T-cell (primary cell): ENCODE measurements at regions of chr3 and their contacts with region 1.

Region 1: DNA sequence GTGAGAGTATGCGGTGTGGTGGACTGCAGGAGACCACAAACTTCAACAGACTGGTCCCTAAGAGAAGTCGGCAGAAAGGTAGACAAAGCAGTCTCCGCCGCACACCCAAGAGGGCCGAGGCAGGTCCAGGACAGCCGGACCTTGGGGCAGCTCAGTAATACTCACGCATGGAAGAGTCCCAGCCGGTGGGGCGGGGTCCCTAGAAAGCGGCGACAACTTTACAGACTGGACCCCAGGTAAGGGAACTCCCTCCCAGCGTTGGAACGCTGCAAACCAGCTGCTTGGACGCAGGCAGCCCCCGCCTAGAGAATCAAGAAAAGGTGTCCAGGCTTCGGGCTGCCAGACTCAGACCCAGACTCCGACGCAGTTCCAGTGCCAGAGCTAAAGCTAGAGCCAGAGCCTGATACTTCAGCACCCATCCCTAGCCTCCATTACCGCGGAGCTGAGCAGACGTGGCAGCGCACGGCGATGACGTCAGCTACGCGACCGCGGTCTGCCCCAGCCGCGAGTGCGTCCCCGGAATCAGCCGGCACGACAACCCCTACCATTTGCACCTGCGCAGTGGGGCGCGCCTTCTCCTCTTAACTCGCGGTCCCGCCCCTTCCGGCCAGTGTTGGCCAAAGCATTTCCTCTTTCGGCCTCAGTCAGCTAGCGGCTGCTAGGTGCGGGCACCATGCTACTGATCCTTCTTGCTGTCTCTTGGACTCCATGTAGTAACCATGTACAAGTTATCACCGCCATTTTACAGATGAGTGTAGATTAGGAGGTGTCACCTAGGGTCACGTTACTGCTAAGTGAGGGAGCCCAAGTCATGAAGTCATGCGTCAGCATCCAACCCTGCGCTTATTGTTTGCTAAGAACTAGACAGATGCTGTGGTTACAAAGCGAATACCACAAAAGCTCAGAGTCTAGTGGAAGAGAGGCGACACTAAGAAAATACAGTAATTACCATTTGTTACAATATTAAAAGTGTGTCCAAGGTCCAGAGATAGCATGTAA is at the start of gene TMEM39A:
- DNase-seq: peak; percentile 97 to 100 (median 98)
- ATAC-seq: peak; percentile 84 to 92 (median 89)
- H3K4me3 ChIP-seq: peak within 1 kb of the TSS; percentile 97 to 99
- H3K4me3 Mint-ChIP-seq: peak within 1 kb of the TSS; percentile 94 to 96 (median 94)
- H3K27ac ChIP-seq: peak within 1 kb of the TSS; percentile 88
- H3K27ac Mint-ChIP-seq: peak within 1 kb of the TSS; percentile 97 to 98
- H3K4me1 ChIP-seq: peaks cover 10 to 23% of the 10 kb centered on the region in 2 experiments
- H3K4me1 Mint-ChIP-seq: peaks cover 37 to 50% (median 41%) of the 10 kb centered on the region in 3 donors
- H3K27me3 ChIP-seq: no peaks in the 10 kb centered on the region
- H3K27me3 Mint-ChIP-seq: no peaks in the 10 kb centered on the region
- total RNA-seq, gene TMEM39A: 35.4 to 59.5 (median 38.7) TPM

Region 2: DNA sequence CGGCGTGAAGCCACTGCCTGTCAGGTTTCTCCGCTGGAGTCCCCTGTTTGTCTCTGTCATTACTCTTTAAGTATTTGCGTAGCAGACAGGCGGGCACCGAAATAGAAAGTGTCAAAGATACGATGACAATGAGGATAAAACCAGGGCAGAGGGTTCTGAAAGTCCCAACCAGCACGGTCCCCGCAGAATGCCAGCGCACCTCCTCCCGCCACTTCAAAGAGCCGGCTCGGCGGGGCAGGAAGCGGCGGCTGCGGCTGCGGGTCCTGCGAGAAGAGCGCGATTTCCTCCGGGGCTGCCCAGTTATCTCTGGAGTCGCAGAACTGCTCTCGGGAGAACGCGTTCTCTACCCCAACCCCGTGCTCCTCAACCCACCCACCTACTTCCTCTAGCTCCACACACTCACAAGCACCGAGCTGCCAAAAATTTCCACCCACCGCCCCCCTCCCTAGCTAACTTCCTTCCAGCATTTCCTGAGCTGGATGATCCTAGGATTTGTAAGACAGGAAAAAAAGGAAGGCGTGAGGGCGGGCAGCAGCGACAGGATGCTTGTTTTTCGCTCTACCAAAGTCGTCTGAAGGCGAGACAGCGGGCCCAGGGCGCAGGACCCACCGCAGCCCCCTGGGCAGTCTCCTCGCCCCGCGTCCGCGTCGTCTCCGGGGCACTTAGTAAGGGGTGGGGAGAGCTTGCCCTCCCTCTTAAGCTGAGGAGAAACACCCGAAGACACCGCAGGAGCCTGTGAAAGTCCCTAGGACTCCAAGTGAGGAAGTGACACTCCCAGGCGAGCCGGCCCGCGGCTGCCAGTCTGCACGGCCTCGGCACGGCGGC is 169.4 kb before region 1 on chr3 and contains the start of gene ARHGAP31:
- CTCF ChIA-PET with region 1: no interaction called
- POLR2A ChIA-PET with region 1: interaction called in 1 of 2 experiments, 15 read pairs
- DNase-seq: peak; percentile 60 to 94 (median 85)
- ATAC-seq: peak; percentile 67 to 76 (median 72)
- H3K4me3 ChIP-seq: peak within 1 kb of the TSS; percentile 74 to 81
- H3K4me3 Mint-ChIP-seq: peak within 1 kb of the TSS; percentile 85 to 93 (median 90)
- H3K27ac ChIP-seq: peak within 1 kb of the TSS; percentile 97
- H3K27ac Mint-ChIP-seq: peak within 1 kb of the TSS; percentile 79 to 94
- H3K4me1 ChIP-seq: peaks cover 15 to 53% of the 10 kb centered on the region in 2 experiments
- H3K4me1 Mint-ChIP-seq: peaks cover 53 to 67% (median 65%) of the 10 kb centered on the region in 3 donors
- H3K27me3 ChIP-seq: peaks cover 0 to 8% of the 10 kb centered on the region in 2 experiments
- H3K27me3 Mint-ChIP-seq: no peaks in the 10 kb centered on the region
- total RNA-seq, gene ARHGAP31: 2.7 to 5.1 (median 3.4) TPM